Activated T-helper 1 cell treated with anti-CD3 and anti-CD28 coated beads, Interleukin-12 subunit alpha, Interleukin-12 subunit beta, Interleukin-2, Interleukin-4 antibody, amounts not matched to agents 30 ng/mL and 10 ng/mL and 1 ng/mL, durations not matched to agents 14 hours and 24 hours and 36 hours (primary cell): ENCODE measurements at regions of chr10 and their contacts with region 1.

Region 1: GRCh38 chr10:26448706-26449435 is 10.7 kb downstream of the APBB1IP start:
- DNase-seq: peak; percentile 79
- H3K4me3 Mint-ChIP-seq: peak overlapping the region; percentile 68
- H3K27ac Mint-ChIP-seq: peak overlapping the region; percentile 93
- H3K4me1 Mint-ChIP-seq: peaks cover 67% of the 10 kb centered on the region
- H3K27me3 Mint-ChIP-seq: no peaks in the 10 kb centered on the region

Region 2: DNA sequence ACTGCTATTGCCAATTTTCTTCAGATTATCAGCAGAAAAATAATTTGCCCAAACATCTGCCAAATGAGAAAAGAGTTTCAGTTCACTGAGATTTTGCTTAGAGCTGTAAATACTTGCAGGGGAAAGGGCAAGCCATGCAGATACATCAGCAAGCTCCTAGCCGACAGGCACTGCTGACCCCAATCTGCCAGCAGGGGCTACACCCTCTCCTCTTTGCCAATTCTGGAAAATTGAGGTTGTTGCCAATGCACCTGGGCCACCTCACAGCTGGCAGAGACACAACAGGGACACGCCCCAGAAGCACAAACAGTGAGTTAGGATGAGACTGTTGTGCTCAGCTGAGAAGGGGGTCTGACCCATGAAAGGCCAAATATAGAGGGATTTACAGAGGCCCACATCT is 644.4 kb before region 1 on chr10:
- intact Hi-C with region 1: no loop called
- DNase-seq: no peak
- H3K4me3 Mint-ChIP-seq: no peak overlapping the region
- H3K27ac Mint-ChIP-seq: no peak overlapping the region
- H3K4me1 Mint-ChIP-seq: no peaks in the 10 kb centered on the region
- H3K27me3 Mint-ChIP-seq: peaks cover 4% of the 10 kb centered on the region

Region 3: DNA sequence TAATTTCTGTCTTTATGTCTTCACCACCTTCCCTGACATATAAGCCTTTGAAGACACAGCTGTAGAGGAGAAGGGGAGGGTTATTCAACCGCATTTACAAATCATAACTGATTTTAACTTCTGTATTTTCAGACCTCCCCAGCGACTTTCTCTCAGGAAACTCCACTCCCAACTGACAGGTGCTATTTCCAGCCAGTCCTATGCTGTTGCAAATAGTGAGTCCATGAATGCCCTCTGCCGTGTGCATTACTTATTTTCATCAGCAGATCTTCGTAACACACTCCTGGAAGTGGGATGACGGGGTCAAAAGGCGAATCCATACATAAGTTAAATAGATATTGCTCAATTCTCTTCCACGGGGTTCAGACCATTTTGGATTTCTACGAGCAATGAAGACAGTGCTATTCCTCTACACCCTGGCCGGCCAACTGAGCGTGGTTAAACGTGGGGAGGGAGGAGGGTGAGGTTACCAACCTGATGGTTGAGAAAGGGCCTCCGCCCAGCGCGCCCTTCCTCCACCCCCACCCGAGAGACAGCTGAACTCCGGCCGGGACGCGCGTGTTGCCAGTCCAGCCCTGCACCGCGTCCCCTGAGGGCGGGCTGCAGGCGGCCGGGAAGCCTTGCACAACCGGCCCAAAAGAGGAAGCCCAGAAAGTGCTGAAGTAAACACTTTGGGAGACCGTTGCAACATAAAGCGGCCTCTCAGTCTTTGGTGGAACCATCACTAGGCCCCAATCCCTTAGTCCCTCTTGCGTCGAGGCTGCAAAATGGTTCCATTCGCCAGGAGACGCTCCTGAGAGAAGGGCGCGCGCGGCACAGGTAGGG is 11.0 kb before region 1 on chr10 and contains the start of gene APBB1IP:
- intact Hi-C with region 1: loop called (anchors 1 kb)
- DNase-seq: peak; percentile 40
- H3K4me3 Mint-ChIP-seq: peak within 1 kb of the TSS; percentile 95
- H3K27ac Mint-ChIP-seq: peak within 1 kb of the TSS; percentile 93
- H3K4me1 Mint-ChIP-seq: peaks cover 51% of the 10 kb centered on the region
- H3K27me3 Mint-ChIP-seq: no peaks in the 10 kb centered on the region
- total RNA-seq, gene APBB1IP: 39.6 and 43.6 TPM in 2 replicates

Region 4: GRCh38 chr10:26474026-26474425 is 25.2 kb after region 1 on chr10:
- intact Hi-C with region 1: loop called (anchors 1 kb)
- DNase-seq: no peak
- H3K4me3 Mint-ChIP-seq: no peak overlapping the region
- H3K27ac Mint-ChIP-seq: peak overlapping the region; percentile 18
- H3K4me1 Mint-ChIP-seq: peaks cover 77% of the 10 kb centered on the region
- H3K27me3 Mint-ChIP-seq: no peaks in the 10 kb centered on the region

Region 5: DNA sequence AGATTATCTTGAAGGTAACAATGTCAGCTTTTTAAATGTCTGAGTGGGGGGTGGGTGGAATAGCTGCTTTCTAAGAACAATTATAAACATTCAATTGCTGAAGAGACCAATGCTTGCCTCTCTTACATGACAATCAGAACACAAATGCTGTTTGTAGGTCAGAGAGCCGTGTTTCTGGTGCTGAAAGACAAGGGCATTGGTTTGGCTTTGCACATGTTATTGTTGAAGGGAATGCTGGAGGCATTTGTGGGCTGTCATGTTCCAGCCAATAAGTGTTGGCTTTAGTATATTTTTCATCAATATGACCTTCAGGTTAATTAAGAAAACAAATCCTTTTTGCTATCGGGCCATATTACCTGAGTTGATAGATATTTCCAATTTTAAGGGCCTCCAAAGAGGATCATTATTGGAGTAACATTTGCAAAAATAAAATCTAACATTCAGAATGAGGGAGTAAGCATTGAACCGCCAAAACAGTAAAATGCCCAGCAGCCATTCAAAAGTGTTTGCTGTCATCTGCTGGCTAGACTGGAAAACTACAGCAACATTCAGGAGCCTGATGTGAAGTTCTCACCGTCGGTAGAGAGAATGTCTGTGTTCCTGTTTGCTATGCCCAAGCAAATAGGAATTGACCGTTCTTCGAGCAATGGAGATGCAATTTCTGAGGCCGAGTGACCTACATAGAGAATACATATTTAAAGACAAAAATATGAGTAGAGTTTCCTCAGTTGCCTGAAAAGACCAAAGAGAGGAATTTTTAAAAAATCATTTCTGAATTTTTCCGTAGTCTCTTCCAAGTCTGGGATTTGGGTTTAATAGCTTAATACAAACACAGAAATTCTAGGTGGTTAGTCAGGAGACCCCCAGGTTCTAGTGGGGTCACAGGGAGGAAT is 108.1 kb after region 1 on chr10:
- intact Hi-C with region 1: loop called (anchors 5 kb)
- DNase-seq: no peak
- H3K4me3 Mint-ChIP-seq: no peak overlapping the region
- H3K27ac Mint-ChIP-seq: no peak overlapping the region
- H3K4me1 Mint-ChIP-seq: peaks cover 8% of the 10 kb centered on the region
- H3K27me3 Mint-ChIP-seq: no peaks in the 10 kb centered on the region

Region 6: GRCh38 chr10:26737730-26738129 is 288.9 kb after region 1 on chr10:
- intact Hi-C with region 1: loop called (anchors 5 kb)
- DNase-seq: peak; percentile 59
- H3K4me3 Mint-ChIP-seq: peak overlapping the region; percentile 45
- H3K27ac Mint-ChIP-seq: peak overlapping the region; percentile 99
- H3K4me1 Mint-ChIP-seq: peaks cover 74% of the 10 kb centered on the region
- H3K27me3 Mint-ChIP-seq: no peaks in the 10 kb centered on the region

Region 7: DNA sequence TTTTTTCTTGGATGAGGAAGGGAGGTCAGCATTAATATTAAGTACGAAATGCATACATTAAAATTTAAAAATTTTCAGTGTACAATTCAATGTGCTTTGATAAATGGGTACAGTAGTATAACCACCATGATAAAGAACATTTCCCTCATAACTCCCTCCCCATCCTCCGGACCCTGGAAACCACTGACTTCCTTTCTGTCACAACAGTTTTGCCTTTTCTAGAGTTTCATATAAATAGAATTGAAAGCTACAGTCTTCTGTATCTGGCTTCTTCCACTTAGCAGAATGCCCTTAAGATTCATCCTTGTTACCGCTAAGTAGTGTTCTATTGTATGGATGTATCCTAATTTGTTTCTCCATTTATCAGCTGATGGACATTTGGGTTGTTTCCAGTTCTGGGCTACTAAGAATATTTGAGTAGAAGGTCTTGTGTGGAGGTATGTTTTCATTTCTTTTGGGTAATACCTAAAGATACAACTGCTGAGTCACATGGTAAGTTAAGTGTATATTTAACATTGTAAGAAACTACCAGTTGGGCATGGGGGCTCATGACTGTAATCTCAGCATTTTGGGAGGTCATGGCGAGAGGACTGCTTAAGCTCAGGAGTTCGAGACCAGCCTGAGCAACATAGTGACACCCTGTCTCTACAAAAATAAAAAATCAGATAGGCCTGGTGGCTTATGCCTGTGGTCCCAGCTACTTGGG is 381.1 kb after region 1 on chr10:
- intact Hi-C with region 1: no loop called
- DNase-seq: no peak
- H3K4me3 Mint-ChIP-seq: no peak overlapping the region
- H3K27ac Mint-ChIP-seq: peak overlapping the region; percentile 10
- H3K4me1 Mint-ChIP-seq: peaks cover 20% of the 10 kb centered on the region
- H3K27me3 Mint-ChIP-seq: no peaks in the 10 kb centered on the region